Activated T-helper 1 cell treated with anti-CD3 and anti-CD28 coated beads, Interleukin-12 subunit alpha, Interleukin-12 subunit beta, Interleukin-2, Interleukin-4 antibody, amounts not matched to agents 30 ng/mL and 10 ng/mL and 1 ng/mL, durations not matched to agents 14 hours and 24 hours and 36 hours (primary cell): ENCODE measurements at regions of chr14 and their contacts with region 1.

Region 1: DNA sequence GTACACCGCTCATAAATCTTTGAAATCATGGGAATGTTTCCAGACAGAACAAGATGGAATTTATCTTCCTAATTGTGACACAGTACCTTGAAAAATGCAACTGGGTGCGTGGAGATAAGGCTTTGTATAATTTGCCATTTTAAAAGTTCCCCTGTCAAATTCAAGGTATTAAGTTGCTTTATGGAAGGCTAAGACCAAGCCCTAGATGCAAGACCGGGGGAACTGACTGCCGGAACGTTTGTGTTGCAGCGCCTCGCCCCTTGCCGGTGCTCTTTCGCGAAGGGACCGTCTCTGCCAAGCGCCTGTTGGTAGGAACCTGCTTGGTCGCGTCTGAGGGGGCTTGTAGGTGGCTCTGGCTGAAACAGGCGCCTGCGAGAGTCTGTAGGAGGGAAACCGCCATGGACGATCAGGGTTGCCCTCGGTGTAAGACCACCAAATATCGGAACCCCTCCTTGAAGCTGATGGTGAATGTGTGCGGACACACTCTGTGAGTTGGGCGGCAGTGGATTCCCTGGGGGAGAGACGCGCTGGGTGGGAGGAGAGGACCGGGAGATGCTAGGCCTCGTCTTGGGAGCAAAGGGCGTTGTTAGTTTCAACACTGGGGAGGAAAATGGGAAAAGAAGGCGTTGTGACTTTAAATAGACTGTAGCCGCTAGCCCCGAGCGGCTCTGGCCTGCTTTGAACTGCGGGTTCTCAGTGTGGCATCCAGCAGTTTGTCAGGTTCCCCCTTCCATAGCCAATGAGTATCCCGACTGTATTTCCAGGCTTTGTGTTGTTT is at the start of gene MNAT1:
- DNase-seq: peak; percentile 69
- H3K4me3 Mint-ChIP-seq: peak within 1 kb of the TSS; percentile 97
- H3K27ac Mint-ChIP-seq: peak within 1 kb of the TSS; percentile 87
- H3K4me1 Mint-ChIP-seq: peaks cover 27% of the 10 kb centered on the region
- H3K27me3 Mint-ChIP-seq: peaks cover 21% of the 10 kb centered on the region
- total RNA-seq, gene MNAT1: 45.1 and 51.2 TPM in 2 replicates

Region 2: DNA sequence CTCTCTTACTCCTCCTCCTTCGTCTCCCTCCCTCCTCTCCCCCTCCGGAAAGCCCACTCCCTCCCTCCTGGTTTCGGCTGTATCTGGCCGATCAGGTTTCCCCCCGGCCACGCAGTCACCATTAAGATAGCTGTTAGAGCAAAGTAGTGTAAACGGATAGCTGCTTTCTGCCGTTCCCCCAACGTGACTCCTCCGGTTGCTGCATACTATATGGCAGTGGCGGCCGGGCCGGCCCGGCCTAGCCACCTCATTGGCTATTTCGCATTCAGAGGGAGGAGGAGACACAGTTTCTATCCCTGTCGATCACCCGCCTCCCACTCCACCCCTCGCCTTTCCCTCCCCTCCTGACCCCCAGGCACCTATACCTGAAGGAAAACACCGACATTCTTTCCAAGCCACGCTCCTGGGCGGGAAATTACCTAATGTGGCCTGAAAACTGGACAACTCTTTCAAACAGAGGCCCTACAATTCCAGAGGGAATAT is 10.5 kb before region 1 on chr14 and contains the start of gene SIX4:
- intact Hi-C with region 1: loop called (anchors 1 kb)
- DNase-seq: no peak
- H3K4me3 Mint-ChIP-seq: peak within 1 kb of the TSS; percentile 91
- H3K27ac Mint-ChIP-seq: peak within 1 kb of the TSS; percentile 67
- H3K4me1 Mint-ChIP-seq: peaks cover 25% of the 10 kb centered on the region
- H3K27me3 Mint-ChIP-seq: peaks cover 75% of the 10 kb centered on the region
- total RNA-seq, gene SIX4: 0.57 and 1.1 TPM in 2 replicates

Region 3: DNA sequence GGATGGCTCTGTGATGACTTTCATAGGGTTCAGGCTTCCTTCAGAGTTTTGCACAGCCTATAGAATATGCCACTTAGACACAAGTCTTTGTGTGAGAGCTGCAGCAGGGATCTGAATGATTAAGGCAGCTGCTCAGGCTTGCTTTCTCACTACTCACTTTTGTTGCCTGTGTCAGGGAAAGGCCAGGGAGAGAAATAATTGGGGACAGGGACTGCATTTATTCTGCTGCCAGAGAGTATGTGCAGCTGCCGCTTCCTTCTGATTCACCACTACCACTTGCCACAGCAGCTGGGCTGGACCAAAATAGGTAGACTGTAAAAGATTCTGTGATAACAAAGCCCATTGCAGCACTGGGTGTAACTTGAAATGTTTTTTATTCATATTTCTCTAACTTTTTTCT is 196.6 kb after region 1 on chr14:
- intact Hi-C with region 1: no loop called
- DNase-seq: no peak
- H3K4me3 Mint-ChIP-seq: no peak overlapping the region
- H3K27ac Mint-ChIP-seq: no peak overlapping the region
- H3K4me1 Mint-ChIP-seq: peaks cover 1% of the 10 kb centered on the region
- H3K27me3 Mint-ChIP-seq: no peaks in the 10 kb centered on the region